ENCODE measurements at regions of chr6 and their contacts with region 1.

Region 1: GRCh38 chr6:108052706-108053105 is 21.8 kb downstream of the OSTM1 start:
- DNase-seq: no peak
- H3K4me3 ChIP-seq: no peak overlapping the region
- H3K27ac ChIP-seq: no peak overlapping the region
- H3K4me1 ChIP-seq: no peaks in the 10 kb centered on the region
- H3K27me3 ChIP-seq: no peaks in the 10 kb centered on the region
- CTCF ChIP-seq: no peak

Region 2: GRCh38 chr6:107318100-107318736 is 734.5 kb before region 1 on chr6:
- CTCF ChIA-PET with region 1: interaction called, 12 read pairs
- POLR2A ChIA-PET with region 1: no interaction called
- intact Hi-C with region 1: no loop called
- DNase-seq: peak in 1 of 2 experiments; percentile 37
- H3K4me3 ChIP-seq: no peak overlapping the region
- H3K27ac ChIP-seq: no peak overlapping the region
- H3K4me1 ChIP-seq: no peaks in the 10 kb centered on the region
- H3K27me3 ChIP-seq: no peaks in the 10 kb centered on the region
- CTCF ChIP-seq: peak; percentile 76

Region 3: DNA sequence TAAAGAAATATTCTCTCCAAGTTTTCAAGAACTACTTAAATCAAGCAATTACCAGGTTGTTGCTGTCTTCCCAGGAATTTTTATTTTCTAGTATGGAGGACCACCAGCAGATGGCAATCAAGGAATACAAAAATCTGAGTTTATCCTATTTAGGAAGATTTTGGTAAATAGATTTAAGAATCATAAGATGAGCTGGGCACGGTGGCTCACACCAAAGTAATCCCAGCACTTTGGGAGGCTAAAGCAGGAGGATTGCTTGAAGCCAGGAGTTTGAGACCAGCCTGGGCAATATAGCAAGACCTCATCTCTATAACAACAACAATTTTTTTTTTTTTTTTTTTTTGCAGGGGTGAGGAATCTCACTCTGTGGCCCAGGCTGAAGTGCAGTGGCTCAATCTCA is 75.4 kb before region 1 on chr6:
- CTCF ChIA-PET with region 1: interaction called, 5 read pairs
- POLR2A ChIA-PET with region 1: no interaction called
- intact Hi-C with region 1: loop called (anchors 1 kb)
- DNase-seq: no peak
- H3K4me3 ChIP-seq: no peak overlapping the region
- H3K27ac ChIP-seq: no peak overlapping the region
- H3K4me1 ChIP-seq: peaks cover 13% of the 10 kb centered on the region
- H3K27me3 ChIP-seq: no peaks in the 10 kb centered on the region
- CTCF ChIP-seq: peak; percentile 78

Region 4: GRCh38 chr6:108039681-108040080 is 13.0 kb before region 1 on chr6:
- CTCF ChIA-PET with region 1: no interaction called
- POLR2A ChIA-PET with region 1: no interaction called
- intact Hi-C with region 1: no loop called
- DNase-seq: no peak
- H3K4me3 ChIP-seq: no peak overlapping the region
- H3K27ac ChIP-seq: no peak overlapping the region
- H3K4me1 ChIP-seq: no peaks in the 10 kb centered on the region
- H3K27me3 ChIP-seq: no peaks in the 10 kb centered on the region
- CTCF ChIP-seq: no peak